ENCODE measurements at regions of chr15 and their contacts with region 1.

Region 1: GRCh38 chr15:44663409-44664308 is at the start of gene SPG11:
- DNase-seq: peak; percentile 100
- total RNA-seq, gene SPG11: 51.4 to 65.4 TPM

Region 2: DNA sequence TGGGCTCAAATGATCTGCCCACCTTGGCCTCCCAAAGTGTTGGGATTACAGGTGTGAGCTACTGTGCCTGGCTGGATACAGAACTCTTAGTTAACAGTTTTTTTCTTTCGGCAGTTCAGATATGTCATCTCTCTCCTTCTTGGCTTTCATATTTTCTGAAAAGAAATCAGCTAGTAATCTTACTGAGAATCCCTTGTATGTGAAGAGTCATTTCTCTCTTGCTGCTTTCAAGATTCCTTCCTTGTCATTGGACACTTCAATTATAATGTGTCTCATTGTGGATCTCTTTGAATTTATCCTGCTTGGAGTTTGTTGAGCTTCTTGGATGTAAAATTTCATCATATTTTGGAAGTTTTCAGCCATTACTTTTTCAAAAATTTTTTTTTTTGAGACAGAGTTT is 89.7 kb after region 1 on chr15:
- intact Hi-C with region 1: loop called in 1 of 2 experiments (anchors 5 kb)
- DNase-seq: no peak

Measured in posterior vena cava (tissue), 2 donors.